ENCODE measurements at regions of chr9 and their contacts with region 1.

Region 1: DNA sequence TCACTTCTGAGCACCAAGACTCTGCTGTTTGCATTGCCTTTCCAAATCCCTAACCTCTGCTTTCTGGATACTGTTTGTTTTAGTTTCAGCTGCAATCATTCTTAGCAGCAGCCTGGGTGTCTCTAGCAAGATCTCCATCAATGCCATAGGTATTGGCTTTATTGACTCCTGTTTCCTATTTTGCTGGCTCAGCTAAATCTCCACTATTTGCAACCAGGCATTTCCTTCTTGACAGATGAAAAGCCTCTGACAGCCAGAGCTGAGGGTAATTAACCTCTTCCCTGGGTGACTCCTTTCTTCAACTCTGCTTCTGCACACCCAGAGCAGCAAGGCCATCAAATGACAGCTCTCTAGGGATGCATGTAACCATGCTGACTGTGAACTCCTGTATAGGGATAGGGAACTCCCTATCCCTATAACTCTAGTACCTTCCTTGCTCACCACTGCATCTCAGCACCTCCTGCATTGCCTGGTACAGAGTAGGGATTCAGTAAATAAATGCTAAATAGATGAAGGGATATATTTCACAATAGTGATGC is 293.5 kb downstream of the TRIM32 start:
- DNase-seq: no peak
- ATAC-seq: no peak
- H3K4me3 ChIP-seq: no peak overlapping the region
- H3K27ac ChIP-seq: no peak overlapping the region
- H3K4me1 ChIP-seq: no peaks in the 10 kb centered on the region
- H3K27me3 ChIP-seq: no peaks in the 10 kb centered on the region
- CTCF ChIP-seq: no peak
- EP300 ChIP-seq: no peak
- POLR2A ChIP-seq: no peak
- RAD21 ChIP-seq: no peak

Region 2: DNA sequence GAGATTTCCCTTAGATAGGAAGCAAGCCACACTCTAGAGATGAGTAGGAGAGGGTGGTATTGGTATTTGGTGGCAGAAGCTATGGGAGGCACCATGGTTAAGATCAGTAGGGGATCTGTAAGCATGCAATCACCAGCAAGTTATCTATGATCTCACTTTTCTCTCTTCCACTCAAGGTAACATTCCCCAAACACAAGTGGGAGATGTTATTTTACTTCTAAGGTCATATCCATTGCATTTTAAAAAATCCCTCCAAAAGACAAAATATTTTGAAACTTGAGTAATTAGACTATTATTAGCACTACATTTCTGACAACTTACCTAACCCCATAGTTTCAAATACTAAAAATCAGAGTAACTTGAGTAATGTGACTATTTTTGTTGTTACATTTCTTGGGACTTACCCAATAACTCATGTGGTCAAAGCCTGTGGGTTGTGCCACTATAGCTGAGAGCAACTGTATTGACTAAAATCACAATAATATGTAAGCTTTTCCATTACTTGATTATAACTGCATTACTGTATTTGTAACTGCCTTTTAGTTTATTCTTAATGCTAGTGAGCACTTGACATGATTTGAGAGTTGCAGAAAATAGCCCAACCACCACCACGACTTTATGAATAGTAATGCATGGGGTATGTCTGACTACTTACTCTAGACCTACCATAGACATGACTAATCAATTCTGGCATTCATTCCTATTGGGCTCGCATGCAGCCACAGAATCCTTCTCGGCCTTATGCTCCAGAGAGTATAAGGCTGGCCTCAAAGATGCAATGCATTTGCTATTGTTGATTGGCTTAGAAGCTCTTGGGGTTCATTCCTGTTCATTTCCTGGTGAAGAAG is 28.8 kb before region 1 on chr9:
- CTCF ChIA-PET with region 1: no interaction called
- POLR2A ChIA-PET with region 1: no interaction called
- in situ Hi-C with region 1: no loop called
- intact Hi-C with region 1: loop called (anchors 2 kb)
- DNase-seq: no peak
- ATAC-seq: no peak
- H3K4me3 ChIP-seq: no peak overlapping the region
- H3K27ac ChIP-seq: no peak overlapping the region
- H3K4me1 ChIP-seq: no peaks in the 10 kb centered on the region
- H3K27me3 ChIP-seq: no peaks in the 10 kb centered on the region
- CTCF ChIP-seq: no peak
- EP300 ChIP-seq: no peak
- POLR2A ChIP-seq: no peak
- RAD21 ChIP-seq: no peak

Measured in HepG2 (cell line).